Activated CD4-positive, alpha-beta T cell treated with anti-CD3 and anti-CD28 coated beads, Interleukin-2, amount 10 ng/mL, durations not matched to agents 24 days and 14 days (primary cell): ENCODE measurements at regions of chr7 and their contacts with region 1.

Region 1: GRCh38 chr7:45246354-45246753 is 88.8 kb downstream of the RAMP3 start:
- DNase-seq: no peak
- H3K4me3 Mint-ChIP-seq: no peak overlapping the region
- H3K27ac Mint-ChIP-seq: no peak overlapping the region
- H3K4me1 Mint-ChIP-seq: no peaks in the 10 kb centered on the region
- H3K27me3 Mint-ChIP-seq: peaks cover 54% of the 10 kb centered on the region

Region 2: DNA sequence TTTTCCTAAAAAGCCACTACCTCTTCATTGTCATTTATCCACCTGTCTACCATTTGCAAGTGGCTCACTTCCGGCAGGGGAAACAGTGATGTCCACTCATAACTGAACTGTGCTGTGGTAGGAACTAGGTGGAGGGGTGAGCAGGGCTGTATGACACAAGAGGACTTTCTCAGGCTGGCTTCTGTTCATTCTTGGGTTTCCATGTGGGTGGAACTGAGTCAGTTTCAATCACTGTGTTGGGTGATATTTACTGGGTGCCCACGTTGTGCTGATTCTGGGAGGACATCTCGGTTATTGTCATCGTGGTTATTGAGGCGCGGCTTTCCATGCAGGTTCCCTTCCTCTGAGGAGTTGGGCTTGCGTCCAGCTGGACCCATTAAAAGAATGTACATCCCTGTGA is 50.0 kb before region 1 on chr7:
- intact Hi-C with region 1: loop called (anchors 5 kb)
- DNase-seq: peak; percentile 72
- H3K4me3 Mint-ChIP-seq: peak overlapping the region; percentile 18
- H3K27ac Mint-ChIP-seq: peak overlapping the region; percentile 82
- H3K4me1 Mint-ChIP-seq: peaks cover 30% of the 10 kb centered on the region
- H3K27me3 Mint-ChIP-seq: peaks cover 19% of the 10 kb centered on the region

Region 3: DNA sequence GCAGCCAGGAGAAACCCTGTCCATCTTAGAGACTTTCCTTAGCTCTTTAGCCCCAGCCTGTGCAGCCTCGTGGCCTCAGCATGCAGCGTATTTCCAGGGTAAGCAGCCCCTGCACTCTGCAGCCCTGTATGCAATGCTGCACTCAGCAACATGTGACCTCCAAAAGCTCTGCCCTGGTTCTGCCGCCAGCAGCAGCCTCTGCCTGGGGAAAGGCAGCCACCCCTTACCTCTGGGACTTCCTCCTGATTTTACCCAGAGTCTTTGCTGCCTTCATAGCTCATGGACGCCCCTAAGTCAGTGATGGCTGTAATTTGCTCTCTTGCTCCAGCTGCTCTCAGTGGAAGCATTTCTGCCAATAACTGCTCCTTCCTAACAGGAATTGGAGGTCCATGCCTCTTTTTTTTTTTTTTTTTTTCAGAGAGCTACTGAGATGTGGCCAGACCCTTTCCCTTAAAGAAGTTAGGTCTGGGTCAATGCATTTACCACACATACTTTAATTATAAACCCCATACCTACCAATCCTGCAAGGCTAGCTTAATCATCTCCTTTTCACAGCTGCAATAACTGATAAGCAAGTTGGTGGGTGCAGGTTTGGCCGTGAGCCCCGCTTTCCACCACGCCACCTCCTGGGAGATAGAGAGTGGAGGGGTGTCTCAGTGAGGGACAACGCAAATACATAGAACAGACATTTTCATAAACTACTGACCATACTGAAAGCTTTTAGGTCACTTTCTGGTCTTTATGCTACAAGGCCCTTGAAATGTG is 17.0 kb before region 1 on chr7:
- intact Hi-C with region 1: no loop called
- DNase-seq: no peak
- H3K4me3 Mint-ChIP-seq: no peak overlapping the region
- H3K27ac Mint-ChIP-seq: no peak overlapping the region
- H3K4me1 Mint-ChIP-seq: peaks cover 2% of the 10 kb centered on the region
- H3K27me3 Mint-ChIP-seq: peaks cover 40% of the 10 kb centered on the region